K562 (cell line): ENCODE measurements at regions of chr3 and their contacts with region 1.

Region 1: GRCh38 chr3:150787741-150788370 is 24.9 kb upstream of the SIAH2 start:
- DNase-seq: peak; percentile 63 to 89 (median 68)
- ATAC-seq: peak; percentile 95
- H3K4me3 ChIP-seq: no peak overlapping the region
- H3K27ac ChIP-seq: no peak overlapping the region
- H3K4me1 ChIP-seq: peaks cover 5 to 9% of the 10 kb centered on the region in 2 experiments; a peak in 3 of 5 replicates
- H3K27me3 ChIP-seq: no peaks in the 10 kb centered on the region; a peak in 1 of 5 replicates
- CTCF ChIP-seq: peak; percentile 93 to 97 (median 96)
- EP300 ChIP-seq: no peak
- POLR2A ChIP-seq: no peak
- RAD21 ChIP-seq: peak; percentile 78 to 89

Region 2: GRCh38 chr3:150528354-150528797 is 259.5 kb before region 1 on chr3:
- CTCF ChIA-PET with region 1: no interaction called
- POLR2A ChIA-PET with region 1: no interaction called
- in situ Hi-C with region 1: no loop called
- intact Hi-C with region 1: loop called (anchors 5 kb)
- DNase-seq: peak in 2 of 4 experiments; percentile 22 to 28
- ATAC-seq: peak; percentile 69
- H3K4me3 ChIP-seq: no peak overlapping the region
- H3K27ac ChIP-seq: no peak overlapping the region
- H3K4me1 ChIP-seq: no peaks in the 10 kb centered on the region
- H3K27me3 ChIP-seq: no peaks in the 10 kb centered on the region
- CTCF ChIP-seq: peak in 2 of 3 experiments; percentile 19 to 57; a peak in 3 of 6 replicates
- EP300 ChIP-seq: no peak
- POLR2A ChIP-seq: no peak
- RAD21 ChIP-seq: peak; percentile 39 to 62; a peak in 3 of 4 replicates

Region 3: GRCh38 chr3:150830094-150830681 is 42.3 kb after region 1 on chr3:
- CTCF ChIA-PET with region 1: no interaction called
- POLR2A ChIA-PET with region 1: no interaction called
- in situ Hi-C with region 1: no loop called
- intact Hi-C with region 1: loop called (anchors 5 kb)
- DNase-seq: peak; percentile 15 to 47 (median 24)
- ATAC-seq: peak; percentile 92
- H3K4me3 ChIP-seq: no peak overlapping the region
- H3K27ac ChIP-seq: no peak overlapping the region
- H3K4me1 ChIP-seq: no peaks in the 10 kb centered on the region; a peak in 1 of 5 replicates
- H3K27me3 ChIP-seq: peaks cover 18 to 26% of the 10 kb centered on the region in 2 experiments
- CTCF ChIP-seq: peak; percentile 58 to 66 (median 66)
- EP300 ChIP-seq: no peak
- POLR2A ChIP-seq: no peak
- RAD21 ChIP-seq: peak; percentile 12 to 42; a peak in 3 of 4 replicates

Region 4: GRCh38 chr3:150870396-150870795 is 82.5 kb after region 1 on chr3:
- CTCF ChIA-PET with region 1: interaction called, 7 read pairs
- POLR2A ChIA-PET with region 1: interaction called, 4 read pairs
- in situ Hi-C with region 1: no loop called
- intact Hi-C with region 1: loop called (anchors 2 kb)
- DNase-seq: no peak
- ATAC-seq: no peak
- H3K4me3 ChIP-seq: no peak overlapping the region
- H3K27ac ChIP-seq: no peak overlapping the region
- H3K4me1 ChIP-seq: no peaks in the 10 kb centered on the region
- H3K27me3 ChIP-seq: peaks cover 2 to 10% of the 10 kb centered on the region in 2 experiments; a peak in 2 of 5 replicates
- CTCF ChIP-seq: no peak
- EP300 ChIP-seq: no peak
- POLR2A ChIP-seq: no peak
- RAD21 ChIP-seq: no peak

Region 5: GRCh38 chr3:150913133-150913922 is 125.5 kb after region 1 on chr3:
- CTCF ChIA-PET with region 1: no interaction called
- POLR2A ChIA-PET with region 1: no interaction called
- in situ Hi-C with region 1: no loop called
- intact Hi-C with region 1: no loop called
- DNase-seq: no peak
- ATAC-seq: no peak
- H3K4me3 ChIP-seq: no peak overlapping the region
- H3K27ac ChIP-seq: no peak overlapping the region
- H3K4me1 ChIP-seq: no peaks in the 10 kb centered on the region
- H3K27me3 ChIP-seq: peaks cover 4 to 11% of the 10 kb centered on the region in 2 experiments; a peak in 4 of 5 replicates
- CTCF ChIP-seq: no peak
- EP300 ChIP-seq: no peak
- POLR2A ChIP-seq: no peak
- RAD21 ChIP-seq: no peak

Region 6: DNA sequence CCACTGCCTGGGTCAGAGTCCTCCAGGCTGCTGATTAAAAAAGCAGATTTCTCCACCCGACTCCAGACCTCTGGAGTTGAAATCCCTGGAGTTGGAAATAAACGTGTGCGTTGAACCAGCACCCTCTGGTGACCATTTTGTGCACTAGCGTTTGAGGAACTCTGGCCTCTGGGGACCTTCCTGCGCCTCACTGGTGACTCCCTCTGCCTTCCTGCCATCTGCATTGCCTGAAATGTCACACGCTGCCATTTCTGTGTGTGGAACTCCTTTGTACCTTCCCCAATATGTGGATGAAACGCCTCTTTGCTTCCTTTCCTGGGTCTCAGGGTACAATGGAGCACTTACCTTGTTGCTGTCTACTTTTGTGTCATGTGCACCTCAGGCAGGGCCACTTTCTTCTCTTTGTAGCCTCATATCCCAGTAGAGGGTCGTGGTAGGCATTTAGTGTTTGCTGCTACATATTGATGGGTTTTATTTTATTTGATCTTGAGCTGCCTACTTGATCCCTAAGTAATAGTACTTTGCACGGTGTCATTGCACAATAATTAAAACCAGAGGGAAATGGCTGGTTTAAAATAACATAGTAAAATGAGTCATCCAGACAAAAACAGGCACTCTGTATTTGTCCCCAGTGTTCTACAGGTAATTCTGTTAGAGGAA is 358.3 kb after region 1 on chr3:
- CTCF ChIA-PET with region 1: interaction called, 14 read pairs
- POLR2A ChIA-PET with region 1: no interaction called
- in situ Hi-C with region 1: loop called (anchors 10 kb)
- intact Hi-C with region 1: loop called (anchors 2 kb)
- DNase-seq: peak; percentile 43 to 74 (median 52)
- ATAC-seq: peak; percentile 97
- H3K4me3 ChIP-seq: no peak overlapping the region
- H3K27ac ChIP-seq: no peak overlapping the region
- H3K4me1 ChIP-seq: no peaks in the 10 kb centered on the region
- H3K27me3 ChIP-seq: peaks cover 11 to 14% of the 10 kb centered on the region in 2 experiments; a peak in 4 of 5 replicates
- CTCF ChIP-seq: peak; percentile 85 to 90 (median 89)
- EP300 ChIP-seq: no peak
- POLR2A ChIP-seq: no peak
- RAD21 ChIP-seq: peak; percentile 85 to 91

Region 7: GRCh38 chr3:151282921-151283320 is 495.1 kb after region 1 on chr3:
- CTCF ChIA-PET with region 1: no interaction called
- POLR2A ChIA-PET with region 1: no interaction called
- in situ Hi-C with region 1: no loop called
- intact Hi-C with region 1: loop called (anchors 5 kb)
- DNase-seq: peak; percentile 41 to 51 (median 47)
- ATAC-seq: peak; percentile 59; the same call in 2 of the 3 replicates
- H3K4me3 ChIP-seq: no peak overlapping the region
- H3K27ac ChIP-seq: no peak overlapping the region
- H3K4me1 ChIP-seq: no peaks in the 10 kb centered on the region; a peak in 2 of 5 replicates
- H3K27me3 ChIP-seq: no peaks in the 10 kb centered on the region
- CTCF ChIP-seq: peak; percentile 47 to 81 (median 54); a peak in 4 of 6 replicates
- EP300 ChIP-seq: no peak
- POLR2A ChIP-seq: no peak
- RAD21 ChIP-seq: peak; percentile 83 to 85